AG04449 (cell line): ENCODE measurements at regions of chr11 and their contacts with region 1.

Region 1: DNA sequence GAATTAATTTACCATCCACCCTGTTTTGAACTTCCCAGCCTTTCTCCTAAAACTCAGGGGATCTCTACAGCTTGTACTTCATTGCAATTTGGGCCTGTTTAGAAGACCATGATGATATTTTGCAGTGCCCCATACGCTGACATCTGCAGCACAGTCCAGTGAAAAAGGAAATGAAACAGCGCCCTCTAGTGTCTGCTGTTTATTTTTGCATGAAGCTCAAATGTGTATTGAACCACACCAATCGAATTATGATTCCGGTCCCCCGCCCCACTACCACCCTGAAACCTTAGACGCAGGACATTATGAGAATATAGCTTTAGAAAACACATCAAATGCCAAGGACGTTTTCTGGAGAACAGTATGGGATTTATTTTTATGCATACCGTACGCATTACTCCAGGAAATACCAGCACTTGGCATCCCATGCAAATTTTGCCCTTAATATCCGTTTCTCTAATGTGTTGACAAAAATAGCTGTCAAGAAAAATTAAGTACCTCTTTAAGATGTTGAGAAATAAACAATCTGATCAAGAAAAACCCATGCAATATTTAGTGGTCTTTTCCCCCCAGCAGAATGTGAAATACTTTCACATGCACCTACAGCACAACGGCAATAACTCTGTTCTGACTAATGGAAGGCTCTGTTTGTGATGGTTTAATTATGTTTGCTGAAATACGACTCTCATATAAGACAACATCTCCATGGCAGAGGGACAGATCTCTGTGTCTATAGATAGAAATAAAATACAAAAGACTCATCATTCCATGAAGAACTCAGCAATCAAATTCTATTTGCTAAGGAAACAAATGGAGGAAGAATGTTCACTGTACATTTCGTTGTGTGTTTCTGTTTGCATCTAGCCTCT is 93.9 kb downstream of the TECTA start:
- DNase-seq: peak; percentile 10
- H3K4me3 ChIP-seq: no peak overlapping the region
- CTCF ChIP-seq: peak; percentile 62

Region 2: DNA sequence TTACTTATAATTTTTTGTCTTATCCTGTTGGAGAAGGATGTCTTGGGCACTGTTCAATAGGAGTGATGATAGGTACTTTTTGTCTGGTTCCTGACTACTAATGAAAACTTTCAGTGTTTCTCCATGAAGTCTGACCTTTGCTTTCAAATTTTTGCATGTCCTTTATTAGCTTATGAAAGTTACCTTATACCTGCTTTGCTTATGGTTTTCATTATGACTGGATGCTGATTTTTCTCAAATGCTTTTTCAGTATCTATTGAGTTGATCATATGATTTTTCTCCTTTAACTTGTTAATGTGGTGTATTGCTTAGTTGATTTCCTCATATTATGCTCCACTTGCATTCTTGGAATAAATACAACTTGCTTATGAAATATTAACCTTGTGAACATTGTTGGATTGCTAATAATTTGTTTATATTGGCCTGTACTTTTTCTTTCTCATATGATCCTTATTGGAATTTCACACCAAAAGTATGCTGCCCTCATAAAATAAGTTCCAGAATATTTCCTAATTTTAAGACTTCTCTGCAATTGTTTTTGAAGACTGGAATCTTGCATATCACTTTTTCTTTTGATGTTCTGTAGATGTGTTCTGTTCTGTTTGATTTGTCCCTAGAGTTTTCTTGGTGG is 12.6 kb after region 1 on chr11:
- CTCF ChIA-PET with region 1: interaction called, 31 read pairs
- POLR2A ChIA-PET with region 1: no interaction called
- DNase-seq: no peak
- H3K4me3 ChIP-seq: no peak overlapping the region
- CTCF ChIP-seq: no peak

Region 3: DNA sequence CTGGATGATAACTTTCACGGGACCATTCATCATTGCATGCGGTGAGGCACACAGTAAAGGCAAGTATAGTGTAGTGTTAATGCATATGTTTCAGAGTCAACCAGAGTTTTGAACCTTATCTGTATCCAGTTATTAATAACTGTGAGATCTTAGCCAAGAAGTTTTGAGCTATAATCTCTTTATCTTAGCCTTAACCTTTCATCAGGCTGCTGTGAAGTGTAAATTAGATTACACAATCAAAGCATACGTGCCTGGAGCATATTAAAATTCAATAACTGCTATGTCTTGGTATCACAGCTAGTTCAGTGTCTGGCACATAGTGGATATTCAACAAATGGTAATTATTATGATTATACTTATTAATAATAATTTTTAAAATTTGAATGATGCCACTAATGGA is 26.8 kb after region 1 on chr11:
- CTCF ChIA-PET with region 1: interaction called, 12 read pairs
- POLR2A ChIA-PET with region 1: no interaction called
- DNase-seq: no peak
- H3K4me3 ChIP-seq: no peak overlapping the region
- CTCF ChIP-seq: no peak

Region 4: DNA sequence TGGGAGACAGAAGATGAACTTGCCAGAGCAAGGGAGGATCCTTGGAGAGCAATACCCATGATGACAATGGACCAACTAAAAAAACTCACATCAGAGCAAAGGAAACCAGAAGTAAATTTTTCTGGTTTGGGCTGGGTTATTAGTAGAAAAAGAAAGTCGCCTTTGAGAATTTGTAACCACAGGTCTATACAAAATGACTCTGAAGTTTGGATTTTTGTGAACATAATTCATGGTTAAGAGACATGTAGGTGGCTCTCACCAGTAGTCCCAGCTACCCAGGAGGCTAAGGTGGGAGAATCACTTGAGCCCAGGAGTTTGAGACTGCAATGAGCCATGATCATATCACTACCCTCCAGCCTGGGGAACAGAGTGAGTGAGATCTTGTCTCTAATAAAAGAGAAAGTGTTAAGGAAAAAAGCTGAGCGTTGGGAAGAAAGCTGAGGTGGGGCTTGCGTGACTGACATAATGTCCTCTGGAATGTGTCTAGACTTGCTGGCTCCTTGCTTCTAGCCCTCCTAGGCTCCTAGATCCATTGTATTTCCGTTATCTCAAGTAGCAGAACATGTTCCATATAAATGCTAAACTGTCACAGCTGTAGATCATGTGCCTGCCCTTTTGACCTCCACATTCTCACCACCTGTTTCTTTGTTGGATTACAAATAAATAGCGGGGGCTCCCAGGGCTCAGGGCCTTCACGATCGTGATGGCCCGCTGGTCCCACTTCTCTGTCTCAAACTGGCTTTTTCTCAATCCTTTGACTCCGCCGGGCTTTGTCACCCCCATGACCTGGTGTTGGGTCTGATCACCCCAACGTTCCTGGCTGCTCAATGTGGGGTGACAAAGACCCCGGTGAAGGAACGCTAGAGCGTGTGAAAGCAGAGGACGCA is 41.4 kb after region 1 on chr11:
- CTCF ChIA-PET with region 1: interaction called, 12 read pairs
- POLR2A ChIA-PET with region 1: no interaction called
- DNase-seq: no peak
- H3K4me3 ChIP-seq: no peak overlapping the region
- CTCF ChIP-seq: no peak